CD8-positive, alpha-beta memory T cell (primary cell): ENCODE measurements at regions of chr7 and their contacts with region 1.

Region 1: DNA sequence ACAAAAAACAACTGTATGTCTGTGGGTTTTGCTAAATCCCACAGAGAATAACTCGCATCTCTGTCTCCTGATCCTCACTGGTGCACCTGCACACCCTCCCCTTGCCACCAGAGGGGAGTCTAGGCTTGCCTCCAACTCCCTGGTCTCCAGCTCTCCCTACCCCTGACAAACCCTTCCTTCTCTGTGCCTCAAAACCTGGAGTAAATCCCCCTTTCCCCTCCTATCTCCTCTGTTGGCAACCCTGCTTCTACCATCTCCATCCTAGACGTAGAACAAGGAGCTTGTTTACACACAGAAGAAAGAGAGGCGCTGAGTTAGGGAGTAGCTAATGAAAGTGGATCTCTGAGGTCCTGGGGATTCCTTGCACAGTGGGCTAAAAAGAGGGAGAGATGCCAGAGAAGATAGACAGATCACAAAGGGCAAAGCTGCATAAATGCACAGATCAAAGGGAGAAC is 6.0 kb downstream of the MBLAC1 start:
- DNase-seq: peak; percentile 34 to 73 (median 46)
- H3K4me3 ChIP-seq: no peak overlapping the region
- H3K4me3 Mint-ChIP-seq: peak overlapping the region in 2 of 7 donors; percentile 10 to 29
- H3K27ac ChIP-seq: no peak overlapping the region
- H3K27ac Mint-ChIP-seq: peak overlapping the region in 3 of 8 donors; percentile 25 to 51 (median 50)
- H3K4me1 ChIP-seq: peaks cover 19% of the 10 kb centered on the region
- H3K4me1 Mint-ChIP-seq: peaks cover 13 to 25% (median 17%) of the 10 kb centered on the region in 3 donors
- H3K27me3 ChIP-seq: no peaks in the 10 kb centered on the region
- H3K27me3 Mint-ChIP-seq: no peaks in the 10 kb centered on the region

Region 2: GRCh38 chr7:100081535-100082102 is 51.1 kb before region 1 on chr7 and contains the start of gene ZNF3:
- CTCF ChIA-PET with region 1: interaction called, 26 read pairs
- POLR2A ChIA-PET with region 1: no interaction called
- DNase-seq: peak; percentile 95 to 99 (median 97)
- H3K4me3 ChIP-seq: peak within 1 kb of the TSS; percentile 92
- H3K4me3 Mint-ChIP-seq: peak within 1 kb of the TSS; percentile 84 to 96 (median 93)
- H3K27ac ChIP-seq: peak within 1 kb of the TSS; percentile 84
- H3K27ac Mint-ChIP-seq: peak within 1 kb of the TSS; percentile 73 to 98 (median 92)
- H3K4me1 ChIP-seq: peaks cover 24% of the 10 kb centered on the region
- H3K4me1 Mint-ChIP-seq: peaks cover 33 to 45% (median 42%) of the 10 kb centered on the region in 3 donors
- H3K27me3 ChIP-seq: no peaks in the 10 kb centered on the region
- H3K27me3 Mint-ChIP-seq: peaks cover 0 to 3% of the 10 kb centered on the region in 2 donors
- total RNA-seq, gene ZNF3: 26.8 to 27.9 TPM

Region 3: GRCh38 chr7:100167921-100168323 is 35.2 kb after region 1 on chr7:
- CTCF ChIA-PET with region 1: interaction called, 11 read pairs
- POLR2A ChIA-PET with region 1: no interaction called
- DNase-seq: peak in 1 of 5 donors; percentile 28
- H3K4me3 ChIP-seq: peak overlapping the region; percentile 82
- H3K4me3 Mint-ChIP-seq: peak overlapping the region; percentile 19 to 83 (median 75)
- H3K27ac ChIP-seq: peak overlapping the region; percentile 54
- H3K27ac Mint-ChIP-seq: peak overlapping the region in 4 of 8 donors; percentile 12 to 82 (median 57)
- H3K4me1 ChIP-seq: peaks cover 74% of the 10 kb centered on the region
- H3K4me1 Mint-ChIP-seq: peaks cover 49 to 72% (median 59%) of the 10 kb centered on the region in 3 donors
- H3K27me3 ChIP-seq: peaks cover 8% of the 10 kb centered on the region
- H3K27me3 Mint-ChIP-seq: peaks cover 32 to 35% of the 10 kb centered on the region in 2 donors

Region 4: GRCh38 chr7:100221231-100221718 is 88.6 kb after region 1 on chr7:
- CTCF ChIA-PET with region 1: interaction called, 88 read pairs
- POLR2A ChIA-PET with region 1: interaction called, 8 read pairs
- DNase-seq: peak; percentile 69 to 93 (median 89)
- H3K4me3 ChIP-seq: peak overlapping the region; percentile 95
- H3K4me3 Mint-ChIP-seq: peak overlapping the region; percentile 89 to 98 (median 95)
- H3K27ac ChIP-seq: peak overlapping the region; percentile 89
- H3K27ac Mint-ChIP-seq: peak overlapping the region; percentile 94 to 100 (median 99)
- H3K4me1 ChIP-seq: peaks cover 52% of the 10 kb centered on the region
- H3K4me1 Mint-ChIP-seq: peaks cover 59 to 77% (median 66%) of the 10 kb centered on the region in 3 donors
- H3K27me3 ChIP-seq: no peaks in the 10 kb centered on the region
- H3K27me3 Mint-ChIP-seq: peaks cover 0 to 7% of the 10 kb centered on the region in 2 donors

Region 5: DNA sequence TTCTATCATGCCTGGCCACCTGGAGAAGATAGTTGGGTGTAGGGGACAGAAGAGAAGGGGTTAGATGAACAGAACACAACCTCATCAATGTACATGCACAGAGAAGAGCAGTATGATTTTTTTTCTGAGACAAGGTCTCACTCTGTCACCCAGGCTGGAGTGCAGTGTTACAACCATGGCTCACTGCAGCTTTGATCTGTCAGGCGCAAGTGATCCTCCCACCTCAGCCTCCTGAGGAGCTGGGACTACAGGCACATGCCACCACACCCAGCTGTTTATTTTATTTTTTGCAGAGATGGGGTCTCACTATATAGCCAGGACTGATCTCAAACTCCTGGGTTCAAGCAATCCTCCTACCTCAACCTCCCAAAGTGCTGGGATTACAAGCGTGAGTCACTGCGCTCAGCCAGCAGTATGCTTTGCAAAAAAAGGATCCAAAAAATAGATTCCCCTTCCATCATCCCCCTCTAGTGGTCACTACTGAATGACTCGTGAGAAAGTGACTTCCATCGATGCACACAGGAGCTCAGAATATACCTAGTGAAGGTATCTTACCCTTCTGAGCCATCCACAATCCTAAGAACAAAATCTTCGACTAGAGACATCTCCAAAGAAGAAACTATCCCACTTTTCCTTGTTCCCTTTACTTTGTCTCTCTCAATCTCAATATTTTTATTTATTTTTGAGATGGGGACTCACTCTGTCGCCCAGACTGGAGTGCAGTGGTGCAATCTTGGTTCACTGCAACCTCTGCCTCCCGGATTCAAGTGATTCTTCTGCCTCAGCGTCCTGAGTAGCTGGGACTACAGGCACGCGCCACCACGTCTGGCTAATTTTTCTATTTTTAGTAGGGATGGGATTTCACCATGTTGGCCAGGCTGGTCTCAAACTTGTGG is 274.8 kb after region 1 on chr7:
- CTCF ChIA-PET with region 1: interaction called, 35 read pairs
- POLR2A ChIA-PET with region 1: no interaction called
- DNase-seq: peak in 4 of 5 donors; percentile 6 to 62 (median 56)
- H3K4me3 ChIP-seq: no peak overlapping the region
- H3K4me3 Mint-ChIP-seq: no peak overlapping the region
- H3K27ac ChIP-seq: no peak overlapping the region
- H3K27ac Mint-ChIP-seq: no peak overlapping the region
- H3K4me1 ChIP-seq: peaks cover 5% of the 10 kb centered on the region
- H3K4me1 Mint-ChIP-seq: peaks cover 0 to 3% (median 2%) of the 10 kb centered on the region in 3 donors
- H3K27me3 ChIP-seq: peaks cover 3% of the 10 kb centered on the region
- H3K27me3 Mint-ChIP-seq: no peaks in the 10 kb centered on the region